Mammary epithelial cell (primary cell): ENCODE measurements at regions of chr17 and their contacts with region 1.

Region 1: DNA sequence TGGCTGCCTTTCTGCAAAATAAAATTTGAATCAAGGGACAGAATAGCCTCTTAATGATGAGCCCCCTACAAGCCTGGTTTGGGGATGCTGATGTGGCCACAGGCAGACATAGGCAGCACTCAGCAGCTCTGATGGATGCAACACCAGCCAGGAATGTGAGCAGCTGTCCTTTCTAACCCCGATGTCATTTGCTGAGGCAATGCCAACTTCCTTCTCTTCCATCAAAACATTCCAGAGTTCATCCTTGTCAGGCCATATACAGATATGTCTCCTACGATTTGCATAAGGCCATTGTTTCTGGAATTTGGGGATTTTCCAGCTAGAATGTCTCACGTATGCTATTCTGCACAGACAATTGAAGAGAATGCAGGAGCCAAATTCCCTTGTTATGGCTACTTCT is 52.1 kb upstream of the MYOCD start:
- DNase-seq: no peak
- H3K4me3 ChIP-seq: no peak overlapping the region
- H3K27ac ChIP-seq: no peak overlapping the region
- H3K4me1 ChIP-seq: no peaks in the 10 kb centered on the region
- H3K27me3 ChIP-seq: no peaks in the 10 kb centered on the region
- CTCF ChIP-seq: no peak

Region 2: DNA sequence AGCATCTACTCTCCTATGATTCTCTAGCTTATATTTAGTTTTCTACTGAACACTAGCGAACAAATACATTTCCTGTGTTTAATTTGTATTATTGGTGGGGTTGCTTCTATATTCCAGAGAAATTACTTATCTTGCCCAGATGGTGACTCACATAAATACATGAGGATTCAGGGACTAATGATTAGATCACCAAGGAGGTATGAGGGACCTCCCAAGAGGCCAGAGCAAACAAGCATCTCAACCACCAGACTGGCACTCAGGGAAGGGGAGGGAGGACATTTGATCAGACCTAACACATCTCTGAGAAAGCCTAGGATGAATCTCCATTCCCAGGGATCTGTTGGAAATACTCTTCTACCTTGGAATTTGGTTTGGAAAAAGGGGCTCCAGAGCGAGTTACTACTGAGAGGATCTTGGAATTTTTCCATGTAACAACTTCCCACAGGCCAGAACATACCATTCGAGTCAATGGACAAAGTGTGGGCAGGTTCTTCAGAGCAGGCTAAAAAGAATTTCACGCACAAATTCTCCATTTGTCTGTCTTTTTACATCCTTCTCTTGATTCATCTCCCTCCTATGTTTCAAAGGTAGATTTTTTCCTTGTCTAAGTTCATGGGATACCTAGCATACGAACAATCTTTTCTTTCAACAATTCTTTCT is 210.5 kb before region 1 on chr17:
- CTCF ChIA-PET with region 1: no interaction called
- dilution Hi-C with region 1: loop called (anchors 10 kb)
- in situ Hi-C with region 1: no loop called
- intact Hi-C with region 1: no loop called
- DNase-seq: no peak
- H3K4me3 ChIP-seq: no peak overlapping the region
- H3K27ac ChIP-seq: no peak overlapping the region
- H3K4me1 ChIP-seq: no peaks in the 10 kb centered on the region
- H3K27me3 ChIP-seq: no peaks in the 10 kb centered on the region
- CTCF ChIP-seq: no peak

Region 3: DNA sequence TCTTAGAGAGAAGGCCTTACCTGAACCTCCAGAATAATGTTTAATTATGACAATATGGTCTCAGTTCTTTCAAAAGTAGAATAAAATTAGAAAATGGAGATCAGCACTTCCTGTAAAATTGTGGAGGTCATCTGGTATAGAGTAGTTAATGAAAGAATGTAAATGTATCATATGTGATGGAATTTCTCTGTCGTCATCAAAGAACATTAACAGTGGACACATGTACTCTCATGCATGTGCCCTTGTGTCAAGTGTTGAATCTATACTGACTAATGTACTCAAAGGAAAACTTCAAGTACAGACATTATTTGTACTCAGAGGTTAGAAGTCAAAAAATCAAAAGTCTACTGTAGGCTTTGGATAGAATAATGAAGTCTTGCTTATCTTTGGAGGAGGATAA is 77.1 kb before region 1 on chr17:
- CTCF ChIA-PET with region 1: no interaction called
- dilution Hi-C with region 1: loop called (anchors 5 kb)
- in situ Hi-C with region 1: no loop called
- intact Hi-C with region 1: no loop called
- DNase-seq: no peak
- H3K4me3 ChIP-seq: no peak overlapping the region
- H3K27ac ChIP-seq: no peak overlapping the region
- H3K4me1 ChIP-seq: no peaks in the 10 kb centered on the region
- H3K27me3 ChIP-seq: no peaks in the 10 kb centered on the region
- CTCF ChIP-seq: no peak